Aorta (tissue), 5 donors: ENCODE measurements at regions of chr15 and their contacts with region 1.

Region 1: GRCh38 chr15:92831655-92832328 is 68.3 kb upstream of the CHD2 start:
- DNase-seq: peak; percentile 92 to 94
- ATAC-seq: peak; percentile 96
- H3K4me3 ChIP-seq: peak overlapping the region; percentile 11 to 61
- H3K27ac ChIP-seq: peak overlapping the region; percentile 96 to 98
- H3K4me1 ChIP-seq: peaks cover 2 to 4% of the 10 kb centered on the region in 2 donors
- H3K27me3 ChIP-seq: no peaks in the 10 kb centered on the region

Region 2: GRCh38 chr15:92808978-92809879 is 22.6 kb before region 1 on chr15:
- intact Hi-C with region 1: loop called (anchors 1 to 2 kb)
- DNase-seq: peak; percentile 99
- ATAC-seq: peak; percentile 96
- H3K4me3 ChIP-seq: peak overlapping the region; percentile 20 to 22
- H3K27ac ChIP-seq: peak overlapping the region; percentile 92 to 98
- H3K4me1 ChIP-seq: no peaks in the 10 kb centered on the region
- H3K27me3 ChIP-seq: no peaks in the 10 kb centered on the region

Region 3: DNA sequence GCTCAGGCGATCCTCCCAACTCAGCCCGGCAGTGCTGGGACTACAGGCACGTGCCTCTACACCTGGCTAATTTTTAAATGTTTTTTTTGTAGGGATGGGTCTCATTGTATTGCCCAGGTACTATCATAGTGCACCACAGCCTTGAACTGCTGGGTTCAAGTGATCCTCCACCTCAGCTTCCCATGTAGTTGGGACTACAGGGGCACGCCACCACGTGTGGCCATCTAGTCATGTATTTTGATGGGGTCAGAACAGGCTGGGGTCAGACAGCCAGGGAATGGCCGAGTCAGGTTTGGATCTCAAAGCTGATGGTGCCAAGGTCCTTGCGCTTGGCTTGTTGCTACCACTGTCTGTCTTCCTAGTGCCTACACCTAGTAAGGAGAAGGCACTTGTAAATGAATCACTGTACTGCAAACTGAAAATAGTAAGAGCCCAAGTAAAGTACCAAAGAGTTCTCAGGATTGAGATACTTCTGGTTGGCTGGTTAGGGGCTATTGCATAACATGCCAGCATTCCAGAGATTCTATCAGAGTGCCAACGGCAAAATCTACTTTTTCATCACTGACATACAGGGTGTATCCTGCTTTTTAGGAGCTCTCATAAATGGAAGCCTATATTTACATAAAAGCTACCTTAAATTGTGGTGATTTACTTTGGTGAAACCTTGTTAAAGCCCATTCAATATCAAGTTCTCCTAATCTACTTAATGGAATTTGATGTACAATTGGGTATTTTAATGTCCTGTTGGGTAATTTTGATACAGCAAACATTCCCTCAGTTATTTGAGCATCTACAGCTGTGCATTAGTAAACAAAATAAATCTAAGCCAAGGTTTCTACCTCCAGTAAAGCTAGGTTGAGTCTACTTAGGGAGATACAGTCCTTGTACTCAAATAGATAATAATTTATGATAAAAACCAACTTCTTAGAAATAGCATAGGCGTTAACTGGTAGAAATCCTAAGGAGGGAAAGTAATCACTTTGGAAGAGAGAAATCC is 37.5 kb after region 1 on chr15:
- intact Hi-C with region 1: loop called in 1 of 2 experiments (anchors 5 kb)
- DNase-seq: no peak
- ATAC-seq: peak; percentile 68
- H3K4me3 ChIP-seq: no peak overlapping the region
- H3K27ac ChIP-seq: peak overlapping the region; percentile 4 to 72
- H3K4me1 ChIP-seq: no peaks in the 10 kb centered on the region
- H3K27me3 ChIP-seq: no peaks in the 10 kb centered on the region